Activated naive CD4-positive, alpha-beta T cell treated with anti-CD3 and anti-CD28 coated beads, Interleukin-2, amount 10 ng/mL, durations not matched to agents 7 days and 5 days (primary cell): ENCODE measurements at regions of chr22 and their contacts with region 1.

Region 1: DNA sequence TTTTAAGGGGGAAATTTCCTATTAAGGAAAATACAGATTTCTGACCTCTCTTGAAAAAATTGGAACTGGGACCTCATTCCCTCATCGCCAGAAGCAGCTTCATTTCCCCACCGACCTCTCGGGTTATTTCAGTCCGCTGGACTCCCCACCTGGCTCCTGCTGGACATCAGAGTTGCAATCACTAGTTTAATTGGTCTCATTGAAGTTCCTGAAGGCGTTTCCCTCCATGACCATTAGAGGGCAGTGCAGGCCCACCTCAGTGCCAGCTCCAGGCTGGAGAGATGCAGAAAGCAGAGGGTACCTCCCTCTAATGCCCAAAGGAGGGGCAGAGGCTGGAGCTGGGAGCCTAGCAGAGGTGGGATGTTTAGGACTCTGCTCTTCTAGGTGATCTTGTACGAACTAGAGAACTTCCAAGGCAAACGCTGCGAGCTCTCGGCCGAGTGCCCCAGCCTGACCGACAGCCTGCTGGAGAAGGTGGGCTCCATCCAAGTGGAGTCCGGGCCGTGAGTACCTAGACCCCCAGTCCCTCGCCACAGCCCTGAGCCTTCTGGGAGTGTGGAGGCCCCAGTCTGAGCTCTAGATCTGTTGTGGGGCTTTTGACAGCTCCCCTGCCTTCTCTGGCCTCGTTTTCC is 2.7 kb downstream of the CRYBB3 start:
- DNase-seq: peak; percentile 70
- H3K4me3 Mint-ChIP-seq: no peak overlapping the region
- H3K27ac Mint-ChIP-seq: no peak overlapping the region
- H3K4me1 Mint-ChIP-seq: no peaks in the 10 kb centered on the region
- H3K27me3 Mint-ChIP-seq: no peaks in the 10 kb centered on the region

Region 2: GRCh38 chr22:25186140-25186539 is 16.3 kb before region 1 on chr22:
- CTCF ChIA-PET with region 1: interaction called, 12 read pairs
- DNase-seq: no peak
- H3K4me3 Mint-ChIP-seq: no peak overlapping the region
- H3K27ac Mint-ChIP-seq: no peak overlapping the region
- H3K4me1 Mint-ChIP-seq: no peaks in the 10 kb centered on the region
- H3K27me3 Mint-ChIP-seq: no peaks in the 10 kb centered on the region

Region 3: GRCh38 chr22:25223269-25223838 is 20.9 kb after region 1 on chr22:
- CTCF ChIA-PET with region 1: no interaction called
- DNase-seq: no peak
- H3K4me3 Mint-ChIP-seq: no peak overlapping the region
- H3K27ac Mint-ChIP-seq: no peak overlapping the region
- H3K4me1 Mint-ChIP-seq: no peaks in the 10 kb centered on the region
- H3K27me3 Mint-ChIP-seq: peaks cover 51% of the 10 kb centered on the region